ENCODE measurements at regions of chr7 and their contacts with region 1.

Region 1: DNA sequence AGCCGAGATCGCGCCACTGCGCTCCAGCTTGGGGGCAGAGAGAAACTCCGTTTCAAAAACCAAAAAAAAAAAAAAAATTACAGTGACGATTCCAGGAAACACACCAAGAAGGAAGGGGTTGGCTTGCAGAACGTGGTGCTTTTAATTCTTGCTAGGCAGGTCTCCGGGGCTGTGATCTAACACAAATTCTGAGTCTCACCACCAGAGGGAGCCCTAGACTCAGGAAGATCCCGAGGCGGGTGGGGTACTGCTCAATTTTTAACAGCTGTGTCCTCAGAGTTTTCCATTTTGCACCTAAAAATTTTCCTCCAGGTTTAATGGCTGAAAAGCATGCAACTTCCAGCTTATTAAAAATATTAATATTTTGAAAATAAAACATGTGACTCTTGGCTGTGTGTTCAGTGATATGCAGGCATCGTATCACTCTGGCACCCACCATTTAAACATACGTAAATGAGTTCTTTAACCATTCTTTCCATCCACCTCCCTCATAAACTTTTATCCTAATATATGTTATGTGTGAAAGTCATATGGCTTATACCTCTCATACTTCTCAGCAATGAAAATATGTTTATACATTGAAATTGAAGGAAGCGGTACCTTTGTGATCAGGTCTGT is 26.5 kb upstream of the NUB1 start:
- DNase-seq: peak; percentile 30
- H3K4me3 ChIP-seq: no peak overlapping the region
- H3K27ac ChIP-seq: no peak overlapping the region
- H3K27me3 ChIP-seq: peaks cover 12% of the 10 kb centered on the region
- CTCF ChIP-seq: peak; percentile 81

Region 2: GRCh38 chr7:151251328-151251972 is 63.7 kb before region 1 on chr7:
- CTCF ChIA-PET with region 1: interaction called, 10 read pairs
- POLR2A ChIA-PET with region 1: no interaction called
- DNase-seq: no peak
- H3K4me3 ChIP-seq: peak overlapping the region; percentile 61
- H3K27ac ChIP-seq: peak overlapping the region; percentile 52
- H3K27me3 ChIP-seq: peaks cover 5% of the 10 kb centered on the region
- CTCF ChIP-seq: no peak

Region 3: GRCh38 chr7:151327659-151328058 is 12.5 kb after region 1 on chr7:
- CTCF ChIA-PET with region 1: interaction called, 35 read pairs
- POLR2A ChIA-PET with region 1: no interaction called
- DNase-seq: peak; percentile 39
- H3K4me3 ChIP-seq: no peak overlapping the region
- H3K27ac ChIP-seq: no peak overlapping the region
- H3K27me3 ChIP-seq: peaks cover 6% of the 10 kb centered on the region
- CTCF ChIP-seq: no peak

Region 4: DNA sequence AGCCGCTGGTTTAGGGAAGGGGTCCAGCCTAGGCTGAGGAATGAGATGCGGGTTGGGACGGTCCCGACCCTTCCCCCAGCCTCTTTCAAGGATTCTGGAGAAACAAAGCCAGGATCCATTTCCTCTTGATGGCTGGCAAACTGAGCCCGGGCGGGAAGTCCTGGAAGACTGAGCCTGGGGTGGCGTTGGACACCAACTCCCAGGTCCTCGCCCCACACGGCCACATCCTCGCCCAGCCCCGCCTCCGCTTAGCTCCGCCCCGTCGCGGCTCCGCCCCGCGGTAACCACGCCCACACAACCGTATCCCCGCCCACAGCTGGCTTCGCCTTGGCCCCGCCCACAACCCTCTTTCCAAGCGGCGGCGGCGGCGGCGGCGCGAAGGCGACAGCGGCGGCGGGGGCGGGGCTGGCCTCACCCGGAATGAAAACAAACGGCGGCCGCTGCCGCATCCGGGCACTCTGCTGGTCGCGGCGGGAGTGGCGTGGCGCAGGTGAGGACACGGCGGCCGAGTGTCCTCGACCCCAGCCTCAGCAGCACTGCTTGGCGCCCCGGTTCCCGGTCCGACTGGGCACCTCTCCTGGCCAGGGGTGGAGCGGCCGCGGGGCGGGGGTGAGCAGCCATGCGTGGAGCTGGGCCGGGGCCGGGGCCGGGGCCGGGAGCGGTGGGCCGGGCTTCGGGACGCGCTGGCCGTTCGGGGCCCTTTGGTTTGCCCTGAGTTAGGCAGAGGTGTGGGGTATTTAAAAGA is 26.4 kb after region 1 on chr7 and contains the start of gene NUB1:
- CTCF ChIA-PET with region 1: interaction called, 33 read pairs
- POLR2A ChIA-PET with region 1: interaction called, 7 read pairs
- DNase-seq: peak; percentile 46
- H3K4me3 ChIP-seq: peak within 1 kb of the TSS; percentile 71
- H3K27ac ChIP-seq: no peak within 1 kb of the TSS
- H3K27me3 ChIP-seq: peaks cover 7% of the 10 kb centered on the region
- CTCF ChIP-seq: no peak
- polyA plus RNA-seq, gene NUB1: 42.7 and 64.1 TPM in 2 replicates

Region 5: DNA sequence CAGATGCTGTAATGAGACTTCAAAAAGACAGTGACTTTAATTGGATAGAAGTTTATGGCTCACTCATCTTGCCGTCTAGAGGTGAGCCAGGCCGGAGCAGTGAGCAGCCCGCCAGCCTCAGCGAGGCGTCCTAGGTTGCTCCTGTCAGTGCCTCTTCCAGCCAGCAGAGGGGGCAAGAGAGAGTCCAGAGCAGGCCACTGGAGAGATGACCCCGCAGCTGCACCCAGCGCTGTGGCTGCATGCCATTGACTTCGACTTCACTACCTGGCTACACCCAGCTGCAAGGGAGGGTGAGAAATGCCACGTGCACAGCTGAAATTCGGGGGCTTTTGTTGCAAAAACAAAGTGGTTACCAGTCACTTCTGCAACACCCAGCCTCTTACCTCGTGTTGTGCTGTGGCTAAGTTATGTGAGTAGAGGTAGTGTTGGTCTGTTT is 53.0 kb after region 1 on chr7:
- CTCF ChIA-PET with region 1: interaction called, 19 read pairs
- POLR2A ChIA-PET with region 1: no interaction called
- DNase-seq: peak; percentile 39
- H3K4me3 ChIP-seq: no peak overlapping the region
- H3K27ac ChIP-seq: no peak overlapping the region
- H3K27me3 ChIP-seq: no peaks in the 10 kb centered on the region
- CTCF ChIP-seq: peak; percentile 97

Region 6: GRCh38 chr7:151436446-151437158 is 121.5 kb after region 1 on chr7:
- CTCF ChIA-PET with region 1: no interaction called
- POLR2A ChIA-PET with region 1: no interaction called
- DNase-seq: no peak
- H3K4me3 ChIP-seq: no peak overlapping the region
- H3K27ac ChIP-seq: no peak overlapping the region
- H3K27me3 ChIP-seq: peaks cover 17% of the 10 kb centered on the region
- CTCF ChIP-seq: no peak

Region 7: GRCh38 chr7:151759591-151760042 is 444.5 kb after region 1 on chr7:
- CTCF ChIA-PET with region 1: interaction called, 17 read pairs
- POLR2A ChIA-PET with region 1: no interaction called
- DNase-seq: no peak
- H3K4me3 ChIP-seq: no peak overlapping the region
- H3K27ac ChIP-seq: no peak overlapping the region
- H3K27me3 ChIP-seq: peaks cover 33% of the 10 kb centered on the region
- CTCF ChIP-seq: peak; percentile 89